Activated naive CD4-positive, alpha-beta T cell treated with anti-CD3 and anti-CD28 coated beads, Interleukin-2, amount 10 ng/mL, durations not matched to agents 7 days and 5 days (primary cell): ENCODE measurements at regions of chr15 and their contacts with region 1.

Region 1: GRCh38 chr15:72285927-72286516 is 13.7 kb upstream of the PARP6 start:
- DNase-seq: peak; percentile 61
- H3K4me3 Mint-ChIP-seq: no peak overlapping the region
- H3K27ac Mint-ChIP-seq: no peak overlapping the region
- H3K4me1 Mint-ChIP-seq: no peaks in the 10 kb centered on the region
- H3K27me3 Mint-ChIP-seq: peaks cover 2% of the 10 kb centered on the region

Region 2: DNA sequence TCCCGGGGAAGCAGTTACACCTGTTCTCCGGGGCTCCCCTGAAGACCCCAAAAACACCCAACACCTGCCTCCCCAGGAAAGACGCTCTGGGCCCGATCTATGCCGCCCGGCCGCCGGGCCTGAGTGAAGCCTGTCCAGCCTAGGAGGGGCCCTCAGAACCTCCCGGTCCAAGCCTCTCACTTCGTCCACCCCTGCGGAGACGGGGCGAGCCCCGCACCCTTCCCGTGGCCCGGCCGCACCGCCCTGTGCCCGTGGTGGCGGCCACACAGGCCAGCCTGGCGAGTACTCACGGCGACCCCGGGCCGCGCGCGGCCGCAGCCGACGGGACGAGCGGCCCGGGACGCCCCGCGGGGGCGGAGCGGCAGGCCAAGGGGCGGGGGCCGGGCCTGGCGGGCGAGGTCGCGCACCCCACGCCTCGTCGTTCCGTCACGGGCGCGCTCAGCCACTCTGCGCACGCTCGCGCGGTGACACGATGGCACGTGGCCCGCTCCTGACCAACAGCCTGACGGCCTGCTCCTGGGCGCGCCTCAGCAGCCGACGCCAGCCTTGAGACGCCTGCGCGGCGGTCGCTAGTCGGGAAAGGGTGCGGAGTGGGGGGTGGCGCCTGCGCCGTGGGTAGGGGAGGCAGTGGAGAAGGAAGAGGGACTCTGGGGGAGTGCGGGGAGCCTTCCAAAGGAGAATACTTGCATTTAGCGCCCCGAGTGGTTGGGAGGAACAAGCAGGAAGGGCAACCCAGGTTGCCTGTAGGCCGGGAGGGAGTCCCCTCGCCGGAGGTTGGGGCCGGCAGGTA is 13.6 kb before region 1 on chr15 and contains the start of gene PARP6:
- CTCF ChIA-PET with region 1: interaction called, 16 read pairs
- DNase-seq: peak; percentile 99
- H3K4me3 Mint-ChIP-seq: peak within 1 kb of the TSS; percentile 88
- H3K27ac Mint-ChIP-seq: peak within 1 kb of the TSS; percentile 86
- H3K4me1 Mint-ChIP-seq: peaks cover 41% of the 10 kb centered on the region
- H3K27me3 Mint-ChIP-seq: no peaks in the 10 kb centered on the region

Region 3: DNA sequence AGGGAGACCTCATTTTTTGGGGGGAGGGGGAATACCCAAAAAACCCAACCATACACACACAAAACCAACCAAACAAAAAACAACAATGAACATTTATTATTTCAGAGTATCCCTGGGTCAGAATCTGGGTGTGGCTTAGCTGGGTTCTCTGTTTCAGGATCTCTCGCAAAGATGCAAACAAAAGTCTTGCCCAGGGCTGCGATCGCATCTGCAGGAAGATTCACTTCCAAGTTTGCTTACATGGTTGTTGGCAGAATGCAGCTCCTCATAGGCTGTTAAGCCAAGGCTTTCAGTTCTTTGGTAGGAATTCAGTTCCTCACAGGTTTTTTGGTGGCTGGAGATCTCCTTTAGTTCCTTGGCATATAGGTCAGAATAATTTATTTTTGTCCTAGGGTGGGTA is 174.4 kb after region 1 on chr15:
- CTCF ChIA-PET with region 1: no interaction called
- DNase-seq: no peak
- H3K4me3 Mint-ChIP-seq: no peak overlapping the region
- H3K27ac Mint-ChIP-seq: no peak overlapping the region
- H3K4me1 Mint-ChIP-seq: peaks cover 22% of the 10 kb centered on the region
- H3K27me3 Mint-ChIP-seq: no peaks in the 10 kb centered on the region